ENCODE measurements at regions of chr20 and their contacts with region 1.

Region 1: GRCh38 chr20:1325173-1326030 is 3.5 kb downstream of the SDCBP2 start:
- DNase-seq: peak; percentile 97
- ATAC-seq: peak; percentile 88
- H3K4me3 Mint-ChIP-seq: no peak overlapping the region
- H3K27ac Mint-ChIP-seq: no peak overlapping the region
- H3K4me1 Mint-ChIP-seq: peaks cover 38% of the 10 kb centered on the region
- H3K27me3 Mint-ChIP-seq: no peaks in the 10 kb centered on the region
- CTCF ChIP-seq: no peak

Region 2: DNA sequence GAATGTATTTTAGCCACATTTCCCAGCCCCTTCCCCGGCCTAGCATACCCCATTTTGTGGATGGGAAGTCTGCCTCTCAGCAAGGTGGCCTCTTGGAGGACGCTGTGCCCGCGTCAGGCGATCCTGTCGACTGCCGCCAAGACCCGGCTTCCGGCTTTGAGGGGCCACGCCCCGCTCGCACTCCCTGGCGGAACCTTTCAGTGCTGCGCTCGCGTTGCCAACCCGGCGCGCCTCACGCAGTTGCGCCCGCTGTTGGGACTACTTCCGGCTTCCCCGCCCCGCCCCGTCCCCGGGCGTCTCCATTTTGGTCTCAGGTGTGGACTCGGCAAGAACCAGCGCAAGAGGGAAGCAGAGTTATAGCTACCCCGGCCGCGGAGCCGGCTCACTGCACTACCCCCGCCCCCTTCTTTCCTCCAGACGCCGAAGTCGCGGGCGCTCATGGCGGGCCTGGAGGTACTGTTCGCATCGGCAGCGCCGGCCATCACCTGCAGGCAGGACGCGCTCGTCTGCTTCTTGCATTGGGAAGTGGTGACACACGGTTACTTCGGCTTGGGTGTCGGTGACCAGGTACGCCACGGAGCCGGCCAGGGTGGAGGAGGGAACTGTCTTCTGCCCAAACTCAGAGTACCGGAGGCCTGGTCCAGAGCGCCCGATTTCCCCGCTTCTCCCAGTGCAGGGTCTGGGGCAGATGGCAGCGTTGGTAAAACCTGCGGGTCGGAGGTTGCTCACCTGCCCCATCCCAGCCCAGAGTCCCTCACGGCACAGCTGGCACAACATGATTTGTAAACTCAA is 206.9 kb before region 1 on chr20 and contains the start of gene PSMF1:
- CTCF ChIA-PET with region 1: no interaction called
- POLR2A ChIA-PET with region 1: no interaction called
- intact Hi-C with region 1: loop called (anchors 1 kb)
- DNase-seq: peak; percentile 98
- ATAC-seq: peak; percentile 94
- H3K4me3 Mint-ChIP-seq: peak within 1 kb of the TSS; percentile 93
- H3K27ac Mint-ChIP-seq: peak within 1 kb of the TSS; percentile 85
- H3K4me1 Mint-ChIP-seq: peaks cover 64% of the 10 kb centered on the region
- H3K27me3 Mint-ChIP-seq: no peaks in the 10 kb centered on the region
- CTCF ChIP-seq: no peak
- total RNA-seq, gene PSMF1: 130 and 137 TPM in 2 replicates

Region 3: DNA sequence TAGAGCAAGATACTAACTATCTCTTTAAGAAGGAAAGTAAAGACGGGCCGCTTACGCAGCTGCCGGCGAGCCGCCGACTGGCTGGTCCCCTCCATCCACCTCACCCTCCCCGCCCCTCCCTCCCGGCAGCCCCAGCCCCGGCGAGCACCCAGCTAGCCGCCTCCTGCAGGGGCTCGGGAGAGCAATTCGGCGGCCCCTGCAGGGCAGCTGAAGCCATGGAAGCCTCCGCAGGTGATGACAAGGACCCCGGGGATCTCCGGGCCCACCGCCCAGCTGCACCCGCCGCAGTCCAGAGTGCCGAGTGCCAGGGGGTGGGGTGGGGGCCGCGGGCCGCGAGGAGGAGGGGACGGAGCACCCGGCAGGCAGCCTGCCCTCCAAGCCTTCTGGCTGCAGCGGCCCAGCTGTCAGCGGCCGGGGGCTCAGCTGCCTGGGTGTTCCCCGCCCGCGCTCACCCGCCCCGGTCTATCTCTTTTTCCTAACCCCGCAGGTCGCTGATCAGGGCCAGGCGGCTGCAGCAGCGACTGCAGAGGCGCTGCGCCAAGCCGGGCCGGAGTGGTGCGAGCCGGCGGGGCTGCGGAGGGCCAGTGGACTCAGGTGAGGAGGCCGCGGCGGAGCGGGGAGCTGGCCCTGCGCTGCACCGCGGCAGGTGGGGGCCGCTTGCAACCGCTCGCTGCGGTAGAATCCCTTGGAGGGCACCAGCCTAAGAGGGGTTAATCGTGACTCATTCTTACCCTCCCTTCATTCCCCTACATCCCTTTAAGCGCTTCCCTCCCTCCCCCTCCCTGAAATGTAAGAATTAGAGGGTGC is 59.0 kb before region 1 on chr20 and contains the start of gene SNPH:
- CTCF ChIA-PET with region 1: no interaction called
- POLR2A ChIA-PET with region 1: interaction called, 3 read pairs
- intact Hi-C with region 1: loop called (anchors 2 kb)
- DNase-seq: peak; percentile 45
- ATAC-seq: peak; percentile 92
- H3K4me3 Mint-ChIP-seq: peak within 1 kb of the TSS; percentile 82
- H3K27ac Mint-ChIP-seq: peak within 1 kb of the TSS; percentile 36
- H3K4me1 Mint-ChIP-seq: peaks cover 12% of the 10 kb centered on the region
- H3K27me3 Mint-ChIP-seq: peaks cover 3% of the 10 kb centered on the region
- CTCF ChIP-seq: no peak
- total RNA-seq, gene SNPH: 0.86 and 1.0 TPM in 2 replicates